B cell (primary cell): ENCODE measurements at regions of chr16 and their contacts with region 1.

Region 1: DNA sequence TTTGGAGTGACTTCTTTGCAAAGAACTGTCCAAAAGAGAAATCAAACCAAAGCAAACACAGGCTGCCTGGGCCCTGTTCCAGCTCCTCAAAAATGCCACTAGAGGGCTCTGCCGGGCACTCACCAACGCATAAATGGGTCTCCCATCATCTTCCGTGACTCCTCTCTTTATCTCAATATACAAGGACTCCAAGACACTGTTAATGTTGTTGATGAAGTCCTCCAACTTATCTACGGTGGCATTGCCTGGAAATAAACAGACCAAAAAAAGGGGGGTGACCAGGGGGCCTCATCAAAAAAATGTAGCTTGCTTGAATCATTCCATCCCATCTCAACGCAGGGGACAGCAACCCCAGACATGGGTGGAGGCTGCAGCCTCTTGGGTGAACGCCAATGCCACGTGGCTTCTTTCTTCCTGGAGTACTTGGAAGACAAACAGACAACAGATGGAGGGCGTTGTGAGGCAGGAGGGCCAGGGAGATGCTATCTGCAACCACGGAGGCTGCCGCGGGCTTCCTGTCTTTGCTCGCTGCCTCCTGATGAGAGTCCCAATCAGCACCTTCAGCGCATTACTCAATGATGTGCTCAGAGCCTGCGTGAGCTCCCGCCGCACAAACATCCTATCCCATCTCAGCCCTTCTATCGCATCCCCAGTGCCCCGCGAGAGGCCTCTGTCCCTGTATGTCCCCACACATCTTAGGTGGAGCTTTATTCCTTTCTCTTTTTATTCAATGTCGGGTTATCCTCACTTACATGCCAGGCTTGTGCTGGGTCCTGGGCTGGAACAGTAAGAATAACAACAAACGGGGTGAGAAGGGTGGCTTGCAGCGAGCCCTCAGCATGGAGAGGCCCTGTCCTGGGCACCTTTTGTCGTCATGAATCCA is 32.0 kb downstream of the KDM8 start:
- DNase-seq: peak; percentile 77
- ATAC-seq: peak; percentile 13
- H3K4me3 ChIP-seq: peak overlapping the region; percentile 8 to 48 (median 32)
- H3K4me3 Mint-ChIP-seq: peak overlapping the region; percentile 81
- H3K27ac ChIP-seq: peak overlapping the region; percentile 91 to 92
- H3K27ac Mint-ChIP-seq: peak overlapping the region; percentile 93
- H3K4me1 ChIP-seq: peaks cover 83 to 94% of the 10 kb centered on the region in 2 donors
- H3K4me1 Mint-ChIP-seq: peaks cover 85% of the 10 kb centered on the region
- H3K27me3 ChIP-seq: no peaks in the 10 kb centered on the region
- H3K27me3 Mint-ChIP-seq: no peaks in the 10 kb centered on the region
- CTCF ChIP-seq: peak; percentile 85

Region 2: DNA sequence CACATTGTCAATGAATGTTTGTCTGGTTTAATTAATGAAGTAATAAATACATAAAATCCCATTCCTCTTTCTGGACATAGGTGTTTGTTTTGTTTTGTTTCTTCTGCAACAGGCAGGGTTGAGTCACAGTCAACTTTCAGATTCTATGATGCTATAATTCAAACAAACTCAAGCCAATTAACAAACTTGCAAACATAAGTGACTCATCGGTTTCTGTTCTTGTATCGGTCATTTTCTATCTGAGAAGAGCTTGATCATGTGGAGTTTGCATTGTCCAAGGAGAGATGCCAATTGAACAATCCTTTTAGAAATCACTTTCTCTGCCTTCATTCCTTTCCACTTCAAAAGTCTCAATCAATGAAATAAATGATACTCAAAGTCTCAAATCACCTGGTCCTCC is 462.8 kb before region 1 on chr16:
- CTCF ChIA-PET with region 1: no interaction called
- POLR2A ChIA-PET with region 1: no interaction called
- intact Hi-C with region 1: no loop called
- DNase-seq: no peak
- ATAC-seq: no peak
- H3K4me3 ChIP-seq: no peak overlapping the region
- H3K4me3 Mint-ChIP-seq: no peak overlapping the region
- H3K27ac ChIP-seq: no peak overlapping the region
- H3K27ac Mint-ChIP-seq: no peak overlapping the region
- H3K4me1 ChIP-seq: no peaks in the 10 kb centered on the region
- H3K4me1 Mint-ChIP-seq: no peaks in the 10 kb centered on the region
- H3K27me3 ChIP-seq: no peaks in the 10 kb centered on the region
- H3K27me3 Mint-ChIP-seq: peaks cover 17% of the 10 kb centered on the region
- CTCF ChIP-seq: no peak

Region 3: GRCh38 chr16:26905336-26905735 is 330.0 kb before region 1 on chr16:
- CTCF ChIA-PET with region 1: no interaction called
- POLR2A ChIA-PET with region 1: no interaction called
- intact Hi-C with region 1: no loop called
- DNase-seq: no peak
- ATAC-seq: no peak
- H3K4me3 ChIP-seq: no peak overlapping the region
- H3K4me3 Mint-ChIP-seq: no peak overlapping the region
- H3K27ac ChIP-seq: no peak overlapping the region
- H3K27ac Mint-ChIP-seq: no peak overlapping the region
- H3K4me1 ChIP-seq: no peaks in the 10 kb centered on the region
- H3K4me1 Mint-ChIP-seq: no peaks in the 10 kb centered on the region
- H3K27me3 ChIP-seq: peaks cover 0 to 5% (median 0%) of the 10 kb centered on the region in 4 experiments
- H3K27me3 Mint-ChIP-seq: peaks cover 18% of the 10 kb centered on the region
- CTCF ChIP-seq: no peak

Region 4: GRCh38 chr16:27169511-27170071 is 65.7 kb before region 1 on chr16:
- CTCF ChIA-PET with region 1: interaction called, 15 read pairs
- POLR2A ChIA-PET with region 1: interaction called, 9 read pairs
- intact Hi-C with region 1: no loop called
- DNase-seq: peak; percentile 32
- ATAC-seq: peak; percentile 37
- H3K4me3 ChIP-seq: no peak overlapping the region
- H3K4me3 Mint-ChIP-seq: no peak overlapping the region
- H3K27ac ChIP-seq: no peak overlapping the region
- H3K27ac Mint-ChIP-seq: peak overlapping the region; percentile 32
- H3K4me1 ChIP-seq: peaks cover 25 to 34% of the 10 kb centered on the region in 2 donors
- H3K4me1 Mint-ChIP-seq: peaks cover 31% of the 10 kb centered on the region
- H3K27me3 ChIP-seq: no peaks in the 10 kb centered on the region
- H3K27me3 Mint-ChIP-seq: no peaks in the 10 kb centered on the region
- CTCF ChIP-seq: no peak

Region 5: GRCh38 chr16:27208796-27209195 is 26.5 kb before region 1 on chr16:
- CTCF ChIA-PET with region 1: interaction called, 21 read pairs
- POLR2A ChIA-PET with region 1: interaction called, 24 read pairs
- intact Hi-C with region 1: loop called (anchors 1 kb)
- DNase-seq: no peak
- ATAC-seq: no peak
- H3K4me3 ChIP-seq: no peak overlapping the region
- H3K4me3 Mint-ChIP-seq: no peak overlapping the region
- H3K27ac ChIP-seq: no peak overlapping the region
- H3K27ac Mint-ChIP-seq: no peak overlapping the region
- H3K4me1 ChIP-seq: peaks cover 21 to 24% of the 10 kb centered on the region in 2 donors
- H3K4me1 Mint-ChIP-seq: peaks cover 20% of the 10 kb centered on the region
- H3K27me3 ChIP-seq: no peaks in the 10 kb centered on the region
- H3K27me3 Mint-ChIP-seq: no peaks in the 10 kb centered on the region
- CTCF ChIP-seq: no peak

Region 6: GRCh38 chr16:27273670-27274423 is 38.6 kb after region 1 on chr16:
- CTCF ChIA-PET with region 1: interaction called, 33 read pairs
- POLR2A ChIA-PET with region 1: interaction called, 6 read pairs
- intact Hi-C with region 1: loop called (anchors 2 kb)
- DNase-seq: no peak
- ATAC-seq: peak; percentile 48
- H3K4me3 ChIP-seq: peak overlapping the region in 2 of 5 experiments; percentile 1 to 26
- H3K4me3 Mint-ChIP-seq: peak overlapping the region; percentile 54
- H3K27ac ChIP-seq: peak overlapping the region; percentile 74 to 82
- H3K27ac Mint-ChIP-seq: peak overlapping the region; percentile 87
- H3K4me1 ChIP-seq: peaks cover 64 to 67% of the 10 kb centered on the region in 2 donors
- H3K4me1 Mint-ChIP-seq: peaks cover 62% of the 10 kb centered on the region
- H3K27me3 ChIP-seq: no peaks in the 10 kb centered on the region
- H3K27me3 Mint-ChIP-seq: no peaks in the 10 kb centered on the region
- CTCF ChIP-seq: no peak

Region 7: GRCh38 chr16:27337024-27337423 is 101.7 kb after region 1 on chr16:
- CTCF ChIA-PET with region 1: interaction called, 11 read pairs
- POLR2A ChIA-PET with region 1: interaction called, 6 read pairs
- intact Hi-C with region 1: no loop called
- DNase-seq: no peak
- ATAC-seq: peak; percentile 54
- H3K4me3 ChIP-seq: no peak overlapping the region
- H3K4me3 Mint-ChIP-seq: no peak overlapping the region
- H3K27ac ChIP-seq: no peak overlapping the region
- H3K27ac Mint-ChIP-seq: peak overlapping the region; percentile 59
- H3K4me1 ChIP-seq: peaks cover 41 to 49% of the 10 kb centered on the region in 2 donors
- H3K4me1 Mint-ChIP-seq: peaks cover 51% of the 10 kb centered on the region
- H3K27me3 ChIP-seq: no peaks in the 10 kb centered on the region
- H3K27me3 Mint-ChIP-seq: no peaks in the 10 kb centered on the region
- CTCF ChIP-seq: no peak

Region 8: GRCh38 chr16:27401768-27402568 is 166.7 kb after region 1 on chr16 and contains the start of gene IL21R:
- CTCF ChIA-PET with region 1: interaction called, 15 read pairs
- POLR2A ChIA-PET with region 1: interaction called, 3 read pairs
- intact Hi-C with region 1: loop called (anchors 1 kb)
- DNase-seq: peak; percentile 91
- ATAC-seq: peak; percentile 64
- H3K4me3 ChIP-seq: peak within 1 kb of the TSS; percentile 54 to 90 (median 86)
- H3K4me3 Mint-ChIP-seq: peak within 1 kb of the TSS; percentile 98
- H3K27ac ChIP-seq: peak within 1 kb of the TSS; percentile 90 to 96
- H3K27ac Mint-ChIP-seq: peak within 1 kb of the TSS; percentile 97
- H3K4me1 ChIP-seq: peaks cover 83 to 99% of the 10 kb centered on the region in 2 donors
- H3K4me1 Mint-ChIP-seq: peaks cover 90% of the 10 kb centered on the region
- H3K27me3 ChIP-seq: no peaks in the 10 kb centered on the region
- H3K27me3 Mint-ChIP-seq: no peaks in the 10 kb centered on the region
- CTCF ChIP-seq: no peak
- total RNA-seq, gene IL21R: 28.5 and 31.6 TPM in 2 replicates

Region 9: GRCh38 chr16:27461483-27462171 is 226.3 kb after region 1 on chr16:
- CTCF ChIA-PET with region 1: interaction called, 54 read pairs
- POLR2A ChIA-PET with region 1: no interaction called
- intact Hi-C with region 1: loop called (anchors 1 kb)
- DNase-seq: no peak
- ATAC-seq: no peak
- H3K4me3 ChIP-seq: no peak overlapping the region
- H3K4me3 Mint-ChIP-seq: no peak overlapping the region
- H3K27ac ChIP-seq: no peak overlapping the region
- H3K27ac Mint-ChIP-seq: no peak overlapping the region
- H3K4me1 ChIP-seq: peaks cover 5 to 8% of the 10 kb centered on the region in 2 donors
- H3K4me1 Mint-ChIP-seq: peaks cover 7% of the 10 kb centered on the region
- H3K27me3 ChIP-seq: no peaks in the 10 kb centered on the region
- H3K27me3 Mint-ChIP-seq: no peaks in the 10 kb centered on the region
- CTCF ChIP-seq: no peak